ENCODE measurements at regions of chr11 and their contacts with region 1.

Region 1: GRCh38 chr11:2305140-2305840 is 3.5 kb downstream of the TSPAN32 start:
- DNase-seq: peak; percentile 91 to 92
- H3K4me3 ChIP-seq: peak overlapping the region in 2 of 4 donors; percentile 5 to 18
- H3K27ac ChIP-seq: peak overlapping the region; percentile 37 to 89 (median 81)
- H3K4me1 ChIP-seq: peaks cover 54 to 78% (median 60%) of the 10 kb centered on the region in 4 donors
- H3K27me3 ChIP-seq: no peaks in the 10 kb centered on the region
- CTCF ChIP-seq: peak in 6 of 7 experiments; percentile 22 to 98 (median 89)
- EP300 ChIP-seq: no peak
- POLR2A ChIP-seq: no peak

Region 2: DNA sequence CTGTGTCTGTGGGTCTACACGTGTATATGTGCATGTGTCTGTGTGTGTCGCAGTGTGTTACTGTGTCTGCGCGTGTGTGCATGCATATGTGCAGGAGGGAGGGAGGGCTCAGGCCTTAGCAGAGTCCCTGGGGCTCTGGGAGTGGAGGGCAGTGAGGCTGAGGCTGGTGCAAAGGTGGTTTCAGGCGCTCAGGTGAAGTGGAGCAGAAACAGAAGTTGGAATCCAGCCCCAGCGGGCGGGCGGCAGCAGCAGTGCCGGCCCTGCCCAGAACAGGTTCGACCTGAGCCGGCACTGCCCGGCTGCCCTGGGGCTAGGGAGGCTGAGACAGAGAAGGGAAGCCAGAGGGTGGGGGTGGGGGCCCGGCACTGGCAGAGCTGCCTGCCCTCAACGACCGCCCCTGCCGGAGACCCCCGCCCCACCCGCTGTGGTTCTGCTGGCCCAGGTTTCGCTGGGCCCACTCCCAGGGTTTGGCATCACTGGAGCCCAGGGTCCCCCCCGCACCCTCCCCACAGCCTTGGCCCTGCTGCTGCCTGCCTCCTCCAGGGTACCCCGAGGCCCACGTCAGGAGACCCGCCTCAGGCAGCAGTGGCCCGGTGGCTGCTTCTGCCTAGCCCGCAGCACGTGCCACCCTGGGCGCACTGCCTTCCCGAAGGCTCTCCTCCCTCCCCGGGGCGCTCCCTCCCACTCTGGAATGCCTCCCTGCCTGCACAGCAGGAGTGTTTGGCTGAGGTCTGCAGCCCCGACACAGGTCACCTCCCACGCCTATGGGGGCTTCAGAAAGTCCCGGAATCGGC is 48.2 kb before region 1 on chr11:
- intact Hi-C with region 1: no loop called
- DNase-seq: peak; percentile 63 to 71
- H3K4me3 ChIP-seq: no peak overlapping the region
- H3K27ac ChIP-seq: no peak overlapping the region
- H3K4me1 ChIP-seq: peaks cover 0 to 10% (median 6%) of the 10 kb centered on the region in 4 donors
- H3K27me3 ChIP-seq: peaks cover 0 to 21% (median 0%) of the 10 kb centered on the region in 3 donors
- CTCF ChIP-seq: no peak
- EP300 ChIP-seq: no peak
- POLR2A ChIP-seq: no peak

Region 3: GRCh38 chr11:2420502-2421225 is 115.4 kb after region 1 on chr11:
- intact Hi-C with region 1: loop called (anchors 2 kb)
- DNase-seq: peak; percentile 77 to 95
- H3K4me3 ChIP-seq: no peak overlapping the region
- H3K27ac ChIP-seq: peak overlapping the region in 1 of 5 donors; percentile 66
- H3K4me1 ChIP-seq: peaks cover 9 to 17% (median 14%) of the 10 kb centered on the region in 4 donors
- H3K27me3 ChIP-seq: peaks cover 0 to 28% (median 5%) of the 10 kb centered on the region in 3 donors
- CTCF ChIP-seq: peak in 5 of 7 experiments; percentile 87 to 93 (median 92)
- EP300 ChIP-seq: no peak
- POLR2A ChIP-seq: no peak